Transverse colon (tissue), 4 donors: ENCODE measurements at regions of chr12 and their contacts with region 1.

Region 1: DNA sequence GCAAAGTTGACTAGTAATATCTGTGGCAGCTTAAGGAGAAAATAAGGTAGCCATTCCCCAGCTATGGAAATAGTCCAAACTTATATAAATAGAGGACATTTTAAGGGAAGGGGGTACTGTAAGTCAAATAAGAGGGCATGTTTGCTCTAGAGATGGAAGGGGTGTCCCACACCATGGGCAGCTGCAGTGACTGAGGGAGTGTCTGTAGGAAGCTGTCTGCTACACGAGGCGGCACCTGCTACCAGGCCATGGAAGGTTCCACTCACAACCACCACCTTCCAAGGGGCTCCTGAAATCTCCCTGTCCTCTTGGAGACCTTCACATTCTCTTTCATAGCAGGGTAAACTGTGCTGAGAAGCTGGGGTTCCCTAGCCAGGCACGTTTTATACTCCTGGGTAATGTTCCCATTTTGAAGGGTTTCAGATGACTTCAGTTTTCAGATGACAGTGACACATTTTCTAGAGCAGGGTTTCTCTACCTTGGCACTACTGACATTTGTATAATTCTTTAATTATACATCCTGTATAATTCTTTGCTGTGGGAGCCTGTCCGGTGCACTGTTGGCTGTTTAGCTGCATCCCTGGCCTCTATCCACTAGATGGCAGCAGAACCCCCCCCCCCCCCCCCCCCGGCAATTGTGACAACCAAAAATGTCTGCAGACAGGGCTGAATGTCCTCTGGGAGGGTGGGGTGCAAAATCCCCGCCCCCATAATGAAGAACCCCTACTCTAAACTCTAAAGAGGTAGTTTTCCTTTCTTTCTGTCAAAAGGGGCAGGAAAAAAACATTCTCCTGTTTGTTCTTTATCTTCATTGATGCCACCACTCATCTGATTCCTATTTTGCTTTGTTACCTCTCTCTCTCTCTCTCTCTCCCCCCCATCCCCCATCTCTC is 11.6 kb upstream of the SMCO2 start:
- DNase-seq: no peak
- H3K4me3 ChIP-seq: no peak overlapping the region
- H3K27ac ChIP-seq: no peak overlapping the region
- H3K4me1 ChIP-seq: no peaks in the 10 kb centered on the region
- H3K27me3 ChIP-seq: no peaks in the 10 kb centered on the region
- CTCF ChIP-seq: peak in 4 of 5 experiments; percentile 17 to 75 (median 48)
- EP300 ChIP-seq: no peak
- POLR2A ChIP-seq: no peak

Region 2: DNA sequence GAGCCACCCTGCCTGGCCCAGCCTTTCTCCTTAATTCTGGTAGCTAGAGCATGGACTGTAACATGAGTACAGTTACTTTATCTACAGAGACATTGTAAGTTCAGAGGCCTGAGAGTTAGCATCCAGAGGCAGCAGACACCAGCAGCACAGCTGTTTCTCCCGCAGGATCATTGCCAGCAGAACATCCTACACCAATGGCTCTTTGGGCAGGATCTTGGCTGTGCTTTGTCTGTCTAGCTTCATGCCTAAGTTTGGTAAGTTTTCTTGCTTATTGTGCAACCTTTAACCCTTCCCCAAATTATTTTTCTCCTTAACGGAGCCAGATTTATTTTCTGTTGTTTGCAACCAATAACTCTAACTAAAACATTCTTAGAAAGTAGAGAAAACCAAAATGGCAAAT is 374.2 kb before region 1 on chr12:
- in situ Hi-C with region 1: no loop called
- intact Hi-C with region 1: no loop called
- DNase-seq: no peak
- H3K4me3 ChIP-seq: no peak overlapping the region
- H3K27ac ChIP-seq: no peak overlapping the region
- H3K4me1 ChIP-seq: no peaks in the 10 kb centered on the region
- H3K27me3 ChIP-seq: no peaks in the 10 kb centered on the region
- CTCF ChIP-seq: no peak
- EP300 ChIP-seq: no peak
- POLR2A ChIP-seq: no peak

Region 3: GRCh38 chr12:27534060-27534764 is 99.3 kb after region 1 on chr12:
- in situ Hi-C with region 1: no loop called
- intact Hi-C with region 1: no loop called
- DNase-seq: no peak
- H3K4me3 ChIP-seq: no peak overlapping the region
- H3K27ac ChIP-seq: no peak overlapping the region
- H3K4me1 ChIP-seq: peaks cover 7 to 35% (median 11%) of the 10 kb centered on the region in 4 donors
- H3K27me3 ChIP-seq: no peaks in the 10 kb centered on the region
- CTCF ChIP-seq: no peak
- EP300 ChIP-seq: no peak
- POLR2A ChIP-seq: no peak

Region 4: DNA sequence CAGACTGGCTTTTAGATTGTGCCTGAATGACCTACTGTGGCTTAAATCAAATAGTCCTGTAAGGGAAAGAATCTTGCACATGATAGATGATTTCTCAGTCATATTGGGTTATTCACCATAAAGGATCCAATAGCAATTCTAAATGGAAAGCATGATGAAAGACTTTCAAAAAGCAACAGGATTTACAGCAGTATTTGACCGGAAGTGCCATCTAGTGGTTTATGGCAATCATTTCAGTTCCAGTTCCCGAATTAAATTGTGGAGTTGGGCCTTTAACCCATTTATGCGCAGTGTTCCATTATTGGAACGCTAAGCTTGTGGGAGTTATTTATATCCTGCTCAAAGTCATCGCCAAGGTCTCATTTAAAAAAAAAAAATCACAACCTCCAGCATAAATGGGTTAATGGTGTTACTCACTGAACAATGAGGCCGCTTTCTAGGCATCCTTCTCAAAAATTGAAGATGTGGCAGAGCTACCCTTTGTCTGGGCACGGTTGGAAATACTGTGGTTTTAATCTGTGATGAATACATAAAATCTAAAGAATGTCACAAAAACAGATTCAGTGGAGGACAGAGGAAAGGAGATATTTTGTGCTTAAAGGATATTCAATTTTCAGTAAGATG is 200.5 kb after region 1 on chr12:
- in situ Hi-C with region 1: loop called in 1 of 4 experiments (anchors 10 kb)
- intact Hi-C with region 1: no loop called
- DNase-seq: no peak
- H3K4me3 ChIP-seq: no peak overlapping the region
- H3K27ac ChIP-seq: no peak overlapping the region
- H3K4me1 ChIP-seq: peaks cover 0 to 8% (median 0%) of the 10 kb centered on the region in 4 donors
- H3K27me3 ChIP-seq: no peaks in the 10 kb centered on the region
- CTCF ChIP-seq: peak; percentile 56 to 75 (median 60)
- EP300 ChIP-seq: no peak
- POLR2A ChIP-seq: no peak

Region 5: DNA sequence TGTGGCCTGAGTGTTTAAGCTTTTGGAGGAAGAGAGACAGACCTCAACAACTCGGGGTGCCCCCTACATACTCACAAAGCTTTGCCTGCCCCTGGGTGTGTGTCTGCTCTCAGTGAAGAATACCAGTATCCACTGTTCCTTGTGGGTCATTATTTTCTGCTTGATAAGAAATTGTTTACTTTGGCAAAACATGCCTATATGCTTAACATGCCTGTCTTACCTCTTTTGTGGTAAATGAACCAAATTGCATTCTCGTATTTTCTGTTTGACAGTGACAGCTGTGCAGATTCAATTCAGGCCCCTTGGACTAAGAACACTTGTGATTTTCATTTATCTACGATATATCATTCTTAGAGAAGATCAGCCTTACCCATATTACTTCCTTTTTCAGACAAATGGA is 210.8 kb after region 1 on chr12:
- in situ Hi-C with region 1: loop called in 3 of 4 experiments (anchors 10 to 25 kb)
- intact Hi-C with region 1: loop called (anchors 5 kb)
- DNase-seq: no peak
- H3K4me3 ChIP-seq: no peak overlapping the region
- H3K27ac ChIP-seq: no peak overlapping the region
- H3K4me1 ChIP-seq: no peaks in the 10 kb centered on the region
- H3K27me3 ChIP-seq: no peaks in the 10 kb centered on the region
- CTCF ChIP-seq: no peak
- EP300 ChIP-seq: no peak
- POLR2A ChIP-seq: no peak

Region 6: DNA sequence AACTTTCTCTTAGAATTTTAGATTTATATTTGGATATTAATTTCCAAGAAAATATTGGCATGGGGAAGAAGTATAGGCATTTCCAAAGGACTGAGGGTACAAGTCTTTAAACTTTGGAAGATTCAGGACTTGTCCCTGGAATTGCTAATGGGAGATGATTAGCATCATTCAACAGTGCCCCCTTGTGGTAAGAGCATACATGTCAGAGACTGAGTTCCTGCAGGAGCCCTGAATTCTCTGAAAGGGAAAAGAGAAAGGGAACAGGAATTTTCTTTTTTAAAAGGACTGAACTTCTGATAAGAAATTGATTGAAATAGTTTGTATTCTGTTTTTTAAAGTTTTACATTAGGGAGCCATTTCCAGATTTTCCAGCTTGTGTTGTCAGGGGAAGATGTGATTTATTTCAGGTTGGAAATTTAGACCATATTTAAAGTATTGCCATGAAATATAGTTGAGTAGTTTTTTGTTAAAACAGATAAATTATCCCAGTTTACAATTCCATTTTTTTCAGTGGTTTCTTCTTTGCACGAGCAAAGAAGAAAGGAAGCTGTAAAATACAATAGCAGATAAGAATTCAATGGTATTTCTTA is 217.3 kb after region 1 on chr12:
- in situ Hi-C with region 1: loop called in 3 of 4 experiments (anchors 10 to 25 kb)
- intact Hi-C with region 1: loop called (anchors 5 kb)
- DNase-seq: peak; percentile 27
- H3K4me3 ChIP-seq: no peak overlapping the region
- H3K27ac ChIP-seq: no peak overlapping the region
- H3K4me1 ChIP-seq: no peaks in the 10 kb centered on the region
- H3K27me3 ChIP-seq: no peaks in the 10 kb centered on the region
- CTCF ChIP-seq: peak; percentile 75 to 86 (median 83)
- EP300 ChIP-seq: no peak
- POLR2A ChIP-seq: no peak